Heart left ventricle (tissue), 16 donors: ENCODE measurements at regions of chr15 and their contacts with region 1.

Region 1: GRCh38 chr15:73633111-73633990 is at the start of gene NPTN:
- DNase-seq: peak; percentile 99 to 100 (median 99)
- ATAC-seq: peak; percentile 93 to 96 (median 94)
- H3K4me3 ChIP-seq: peak within 1 kb of the TSS; percentile 83 to 100 (median 91)
- H3K27ac ChIP-seq: peak within 1 kb of the TSS; percentile 83 to 100 (median 96)
- H3K4me1 ChIP-seq: peaks cover 3 to 57% (median 41%) of the 10 kb centered on the region in 12 donors
- H3K27me3 ChIP-seq: no peaks in the 10 kb centered on the region
- CTCF ChIP-seq: peak in 1 of 12 donors; percentile 17
- POLR2A ChIP-seq: peak in 1 of 2 donors; percentile 83
- total RNA-seq, gene NPTN: 166 to 264 (median 205) TPM

Region 2: DNA sequence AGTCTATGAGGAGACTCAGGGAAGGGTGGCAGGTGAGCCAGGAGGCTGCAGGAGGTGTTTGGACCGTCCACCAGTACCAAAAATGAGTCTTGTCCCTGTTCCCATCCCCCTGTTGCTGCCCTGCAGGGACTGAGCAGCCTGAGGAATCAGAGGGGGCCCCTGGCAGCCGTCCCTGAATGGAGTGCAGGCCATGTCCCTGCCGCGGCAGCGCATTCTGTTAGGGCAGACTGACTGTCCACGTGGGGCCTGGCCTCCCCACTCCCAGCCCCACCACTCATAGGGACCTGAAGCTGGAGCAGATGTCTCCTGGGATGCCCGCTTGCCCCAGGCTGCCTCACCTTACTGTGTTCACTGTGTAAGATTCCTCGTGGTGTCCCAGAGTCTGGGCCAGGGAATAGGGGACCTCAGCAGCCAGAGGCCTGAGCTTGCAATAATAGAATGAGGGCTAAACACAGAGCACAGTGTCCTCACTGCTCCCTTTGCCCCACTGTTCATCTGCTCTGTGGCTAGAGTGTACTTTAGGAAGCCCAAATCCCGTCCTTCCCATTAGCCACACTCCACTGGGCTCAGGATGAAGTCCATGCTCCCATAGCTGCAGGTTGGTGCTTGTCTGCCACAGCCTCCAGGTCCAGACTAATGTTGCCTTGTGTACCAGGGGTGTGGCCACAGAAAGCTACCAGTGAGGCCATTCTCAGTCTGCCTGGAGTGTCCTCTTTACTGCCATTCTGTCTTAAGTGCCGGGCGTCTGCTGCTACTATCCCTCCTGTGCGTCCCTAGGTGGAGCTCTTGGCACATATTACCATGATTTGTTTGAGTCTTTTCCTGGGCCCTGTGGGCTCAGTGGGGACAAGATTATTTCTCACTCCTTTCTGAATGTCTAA is 327.8 kb before region 1 on chr15:
- intact Hi-C with region 1: loop called in 8 of 10 experiments (anchors 1 to 10 kb)
- DNase-seq: peak in 4 of 5 donors; percentile 39 to 53 (median 48)
- ATAC-seq: peak; percentile 72 to 93 (median 86)
- H3K4me3 ChIP-seq: no peak overlapping the region
- H3K27ac ChIP-seq: no peak overlapping the region
- H3K4me1 ChIP-seq: peaks cover 0 to 20% (median 0%) of the 10 kb centered on the region in 12 donors
- H3K27me3 ChIP-seq: no peaks in the 10 kb centered on the region
- CTCF ChIP-seq: peak; percentile 24 to 64 (median 58)
- POLR2A ChIP-seq: no peak

Region 3: DNA sequence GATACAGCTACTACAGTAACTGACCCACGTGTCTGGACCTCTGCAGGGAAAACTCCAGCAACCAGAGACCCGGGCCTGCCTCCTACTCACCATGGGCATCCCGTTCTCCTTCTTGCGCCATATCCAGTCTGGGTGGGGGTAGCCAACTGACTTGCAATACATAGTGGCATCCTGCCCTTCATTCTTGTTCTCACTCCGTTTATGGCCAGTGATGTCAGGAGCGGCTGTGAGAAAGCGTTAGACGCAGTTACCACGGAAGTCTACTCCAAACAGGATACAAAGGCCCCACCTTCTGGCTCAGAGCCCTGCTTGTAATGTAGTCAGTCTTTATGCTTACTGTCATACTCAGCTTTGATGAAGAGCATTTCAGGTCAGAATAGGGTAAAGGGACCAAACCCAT is 59.8 kb before region 1 on chr15:
- intact Hi-C with region 1: loop called in 2 of 10 experiments (anchors 5 kb)
- DNase-seq: peak in 4 of 5 donors; percentile 27 to 53 (median 48)
- ATAC-seq: peak in 3 of 4 donors; percentile 31 to 83 (median 40)
- H3K4me3 ChIP-seq: no peak overlapping the region
- H3K27ac ChIP-seq: peak overlapping the region in 4 of 12 donors; percentile 1 to 55 (median 26)
- H3K4me1 ChIP-seq: peaks cover 0 to 38% (median 18%) of the 10 kb centered on the region in 12 donors
- H3K27me3 ChIP-seq: no peaks in the 10 kb centered on the region
- CTCF ChIP-seq: no peak
- POLR2A ChIP-seq: no peak

Region 4: DNA sequence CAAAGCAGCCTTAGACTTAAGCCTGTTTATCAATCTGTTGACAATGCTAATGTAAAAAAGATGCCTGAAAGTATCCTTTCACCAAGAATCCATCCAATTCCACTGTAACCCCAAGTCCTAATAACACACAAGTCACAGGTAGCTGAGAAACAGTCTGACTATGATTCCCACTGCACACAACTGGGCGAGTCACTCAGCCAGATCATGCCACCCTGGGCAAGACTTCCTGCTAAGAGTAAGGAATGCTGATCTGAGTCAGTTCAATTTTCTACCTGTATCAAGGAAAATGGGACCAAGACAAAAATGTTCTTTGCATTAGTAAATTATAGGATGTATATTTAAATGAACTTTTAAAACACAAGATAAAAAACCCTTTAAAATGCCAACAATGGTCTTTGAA is 33.4 kb before region 1 on chr15:
- intact Hi-C with region 1: loop called in 5 of 10 experiments (anchors 5 kb)
- DNase-seq: no peak
- ATAC-seq: no peak
- H3K4me3 ChIP-seq: no peak overlapping the region
- H3K27ac ChIP-seq: peak overlapping the region in 2 of 12 donors; percentile 80 to 84
- H3K4me1 ChIP-seq: peaks cover 20 to 100% (median 89%) of the 10 kb centered on the region in 12 donors
- H3K27me3 ChIP-seq: no peaks in the 10 kb centered on the region
- CTCF ChIP-seq: no peak
- POLR2A ChIP-seq: no peak

Region 5: DNA sequence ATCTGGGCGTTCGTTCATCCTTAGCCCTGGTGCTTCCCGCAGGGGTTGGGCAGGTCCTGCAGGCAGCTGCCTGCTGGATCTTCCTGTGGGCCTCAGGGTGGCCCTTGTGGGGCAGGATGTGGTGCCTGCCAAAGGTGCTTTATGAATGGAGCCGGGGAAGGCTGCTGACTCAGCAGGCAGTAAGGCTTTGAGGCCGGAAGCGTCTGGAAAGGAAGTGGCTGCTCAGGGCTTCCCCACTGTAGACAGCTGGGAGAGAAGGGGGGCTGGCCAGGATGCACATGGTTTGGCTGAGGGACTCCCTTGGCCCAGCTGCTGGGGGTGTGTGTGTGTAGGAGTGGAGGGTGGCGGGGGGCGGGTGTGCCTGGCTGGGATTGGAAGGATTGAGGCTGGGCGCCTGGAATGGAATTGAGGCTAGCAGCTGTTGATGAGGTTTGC is 63.7 kb after region 1 on chr15:
- intact Hi-C with region 1: loop called in 9 of 10 experiments (anchors 2 to 10 kb)
- DNase-seq: peak; percentile 90 to 94 (median 92)
- ATAC-seq: peak; percentile 89 to 97 (median 92)
- H3K4me3 ChIP-seq: no peak overlapping the region
- H3K27ac ChIP-seq: peak overlapping the region in 6 of 12 donors; percentile 5 to 47 (median 25)
- H3K4me1 ChIP-seq: peaks cover 0 to 56% (median 46%) of the 10 kb centered on the region in 12 donors
- H3K27me3 ChIP-seq: peaks cover 0 to 6% (median 0%) of the 10 kb centered on the region in 9 donors
- CTCF ChIP-seq: no peak
- POLR2A ChIP-seq: no peak